AG04449 (cell line): ENCODE measurements at regions of chr7 and their contacts with region 1.

Region 1: GRCh38 chr7:48299580-48300169 is 128.4 kb downstream of the ABCA13 start:
- DNase-seq: no peak
- H3K4me3 ChIP-seq: no peak overlapping the region
- CTCF ChIP-seq: peak; percentile 69

Region 2: DNA sequence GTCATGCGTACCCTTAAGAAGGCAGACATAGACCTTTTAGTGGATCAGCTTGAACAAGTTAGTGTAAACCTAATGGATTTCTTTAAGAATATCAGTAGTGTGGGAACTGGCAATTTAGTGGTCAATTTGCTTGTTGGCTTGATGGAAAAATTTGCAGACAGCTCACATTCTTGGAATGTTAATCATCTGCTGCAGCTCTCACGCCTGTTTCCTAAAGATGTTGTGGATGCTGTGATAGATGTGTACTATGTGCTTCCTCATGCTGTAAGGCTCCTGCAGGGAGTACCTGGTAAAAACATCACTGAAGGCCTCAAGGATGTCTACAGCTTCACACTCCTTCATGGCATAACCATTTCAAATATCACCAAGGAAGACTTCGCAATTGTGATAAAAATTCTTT is 25.0 kb before region 1 on chr7:
- CTCF ChIA-PET with region 1: interaction called, 15 read pairs
- POLR2A ChIA-PET with region 1: no interaction called
- DNase-seq: no peak
- H3K4me3 ChIP-seq: no peak overlapping the region
- CTCF ChIP-seq: no peak

Region 3: DNA sequence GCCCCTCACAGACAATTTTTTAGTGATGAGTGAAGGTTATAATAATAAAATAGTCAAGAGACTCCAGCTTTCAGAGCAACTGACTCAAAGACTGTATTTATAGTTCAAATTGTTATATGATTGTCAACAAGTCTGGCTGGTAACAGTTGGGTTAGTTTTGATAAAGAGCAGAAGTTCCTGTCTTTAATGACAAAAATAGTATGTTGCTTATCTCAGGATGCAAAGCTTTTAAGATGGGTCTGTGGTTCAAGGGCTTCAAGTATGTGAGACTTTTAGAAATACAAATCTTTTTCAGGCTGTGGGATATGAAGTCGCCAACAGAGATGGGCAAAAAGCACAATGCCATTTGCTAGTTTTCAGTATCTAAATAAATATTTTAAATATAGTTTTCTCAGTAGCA is 10.0 kb before region 1 on chr7:
- CTCF ChIA-PET with region 1: interaction called, 16 read pairs
- POLR2A ChIA-PET with region 1: no interaction called
- DNase-seq: no peak
- H3K4me3 ChIP-seq: no peak overlapping the region
- CTCF ChIP-seq: no peak

Region 4: DNA sequence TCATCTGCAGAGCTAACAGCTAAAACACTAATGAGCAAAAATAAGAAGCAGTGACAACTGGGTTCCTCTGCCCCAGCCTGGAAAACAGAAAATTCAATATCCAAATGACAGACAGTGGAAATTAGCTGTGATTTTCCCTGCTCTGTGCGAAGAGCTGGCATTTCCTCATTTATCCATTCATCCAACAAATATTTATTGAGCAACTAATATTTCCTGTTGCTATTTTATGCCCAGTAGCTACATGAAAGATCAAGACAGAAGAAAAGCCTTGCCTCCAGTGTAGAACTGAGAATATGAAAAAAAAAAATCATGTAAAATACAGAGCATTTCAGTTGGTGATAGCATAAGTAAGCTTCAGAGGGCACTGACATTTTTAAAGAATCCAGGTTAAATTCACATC is 12.5 kb after region 1 on chr7:
- CTCF ChIA-PET with region 1: interaction called, 19 read pairs
- POLR2A ChIA-PET with region 1: no interaction called
- DNase-seq: no peak
- H3K4me3 ChIP-seq: no peak overlapping the region
- CTCF ChIP-seq: no peak

Region 5: DNA sequence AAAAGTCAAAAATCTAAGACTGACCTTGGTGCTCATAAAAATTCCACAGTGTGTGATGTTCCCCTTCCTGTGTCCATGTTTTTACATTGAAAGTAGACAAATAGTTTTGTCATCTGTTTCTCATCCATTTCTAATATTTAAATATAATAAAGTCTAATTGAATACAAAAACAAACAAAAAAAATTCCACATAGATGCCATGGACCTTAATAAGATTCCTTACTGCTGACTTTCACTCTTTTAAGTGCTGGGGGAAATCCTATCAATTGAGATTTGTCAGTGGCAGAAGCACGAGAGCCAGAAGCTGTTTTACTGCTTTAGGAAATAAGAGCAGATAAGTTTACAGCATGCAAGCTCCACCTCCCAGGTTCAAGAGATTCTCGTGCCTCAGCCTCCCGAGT is 181.6 kb after region 1 on chr7:
- CTCF ChIA-PET with region 1: no interaction called
- POLR2A ChIA-PET with region 1: no interaction called
- DNase-seq: no peak
- H3K4me3 ChIP-seq: no peak overlapping the region
- CTCF ChIP-seq: no peak

Region 6: DNA sequence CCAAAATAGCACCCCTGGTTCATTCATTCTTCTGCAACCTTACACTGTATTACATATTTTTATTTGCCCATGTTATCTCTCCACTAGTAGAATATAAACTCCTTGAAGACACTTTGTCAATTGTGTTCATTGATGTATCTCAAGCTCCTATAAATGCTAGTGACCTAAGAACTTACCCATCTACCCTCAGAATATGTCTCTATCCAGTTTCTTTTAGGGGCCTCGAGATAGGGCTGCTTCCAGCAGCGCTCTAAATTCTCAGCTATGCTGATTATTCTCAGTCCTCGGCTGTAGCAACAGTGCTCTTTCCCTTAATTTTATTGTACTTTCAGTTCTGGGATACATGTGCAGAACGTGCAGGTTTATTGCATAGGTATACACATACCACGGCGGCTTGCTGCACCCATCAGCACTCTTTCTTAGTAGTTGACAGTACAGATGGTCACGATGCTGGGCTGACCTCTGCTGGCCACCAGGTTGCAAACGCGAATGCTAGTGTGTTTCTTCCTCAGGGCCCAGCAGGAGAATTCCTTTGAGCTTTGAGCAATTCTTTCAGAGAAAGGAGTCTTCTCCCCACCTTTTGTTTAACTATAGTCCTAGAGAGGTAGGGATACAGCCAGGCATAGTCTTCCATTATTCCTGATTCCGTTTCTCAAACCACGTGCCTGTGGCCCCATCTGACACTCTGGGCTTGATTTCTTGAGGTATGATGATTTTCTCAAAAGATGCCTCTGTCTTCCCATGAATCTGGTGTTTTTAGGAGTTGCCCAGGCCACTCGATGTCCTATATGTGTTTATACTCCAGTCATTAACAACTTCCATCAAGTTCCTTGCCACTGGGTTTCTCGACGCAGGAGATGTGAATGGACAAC is 575.6 kb after region 1 on chr7:
- CTCF ChIA-PET with region 1: interaction called, 10 read pairs
- POLR2A ChIA-PET with region 1: no interaction called
- DNase-seq: no peak
- H3K4me3 ChIP-seq: no peak overlapping the region
- CTCF ChIP-seq: no peak